ENCODE measurements at regions of chr3 and their contacts with region 1.

Region 1: GRCh38 chr3:167740961-167741587 is 5.6 kb downstream of the SERPINI1 start:
- DNase-seq: no peak
- H3K4me3 ChIP-seq: no peak overlapping the region
- H3K27ac ChIP-seq: no peak overlapping the region
- H3K27me3 ChIP-seq: peaks cover 7% of the 10 kb centered on the region
- CTCF ChIP-seq: peak; percentile 76

Region 2: DNA sequence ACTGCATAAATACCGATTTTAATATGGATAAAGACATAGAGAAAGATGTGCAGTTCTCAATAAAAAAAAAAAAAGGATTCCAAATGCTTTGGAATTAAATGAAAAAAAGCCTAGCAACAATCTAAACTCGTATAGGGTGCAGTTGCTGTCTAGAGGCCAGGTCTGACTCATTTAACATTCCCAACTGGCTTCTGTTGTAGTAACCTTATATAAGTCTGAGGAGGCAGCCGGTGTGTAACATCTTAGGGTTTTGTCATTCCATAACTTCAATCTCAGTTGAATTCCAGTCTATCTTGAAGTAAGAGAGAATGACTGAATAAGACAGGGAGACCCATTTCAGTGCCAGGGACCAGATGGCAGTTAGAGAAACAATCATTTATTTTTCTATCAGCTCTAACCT is 12.9 kb before region 1 on chr3:
- CTCF ChIA-PET with region 1: interaction called, 10 read pairs
- POLR2A ChIA-PET with region 1: no interaction called
- DNase-seq: peak; percentile 42
- H3K4me3 ChIP-seq: no peak overlapping the region
- H3K27ac ChIP-seq: no peak overlapping the region
- H3K27me3 ChIP-seq: no peaks in the 10 kb centered on the region
- CTCF ChIP-seq: no peak

Region 3: DNA sequence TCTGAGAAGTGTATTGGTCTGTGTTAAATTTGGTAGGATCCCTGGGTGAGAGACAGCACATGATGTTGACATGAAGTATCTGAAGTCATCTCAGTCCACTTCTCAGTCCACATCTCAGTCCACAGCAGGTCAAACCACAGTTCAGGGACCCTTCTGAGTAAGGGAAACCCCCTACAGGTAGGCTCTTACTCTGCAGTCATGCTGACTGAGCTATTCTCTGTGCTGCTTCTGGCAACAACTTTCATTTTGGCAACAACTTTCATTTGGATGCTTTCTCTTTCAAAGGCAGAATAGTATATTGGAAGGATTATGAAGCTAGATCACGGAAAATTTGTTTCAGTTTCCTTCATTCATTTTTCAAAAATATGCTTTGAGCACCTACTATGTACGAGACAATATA is 532.8 kb after region 1 on chr3:
- CTCF ChIA-PET with region 1: no interaction called
- POLR2A ChIA-PET with region 1: no interaction called
- DNase-seq: no peak
- H3K4me3 ChIP-seq: no peak overlapping the region
- H3K27ac ChIP-seq: no peak overlapping the region
- H3K27me3 ChIP-seq: no peaks in the 10 kb centered on the region
- CTCF ChIP-seq: no peak